Activated CD8-positive, alpha-beta T cell treated with anti-CD3 and anti-CD28 coated beads, Interleukin-2, amount 10 ng/mL, durations not matched to agents 7 days and 5 days (primary cell): ENCODE measurements at regions of chr16 and their contacts with region 1.

Region 1: DNA sequence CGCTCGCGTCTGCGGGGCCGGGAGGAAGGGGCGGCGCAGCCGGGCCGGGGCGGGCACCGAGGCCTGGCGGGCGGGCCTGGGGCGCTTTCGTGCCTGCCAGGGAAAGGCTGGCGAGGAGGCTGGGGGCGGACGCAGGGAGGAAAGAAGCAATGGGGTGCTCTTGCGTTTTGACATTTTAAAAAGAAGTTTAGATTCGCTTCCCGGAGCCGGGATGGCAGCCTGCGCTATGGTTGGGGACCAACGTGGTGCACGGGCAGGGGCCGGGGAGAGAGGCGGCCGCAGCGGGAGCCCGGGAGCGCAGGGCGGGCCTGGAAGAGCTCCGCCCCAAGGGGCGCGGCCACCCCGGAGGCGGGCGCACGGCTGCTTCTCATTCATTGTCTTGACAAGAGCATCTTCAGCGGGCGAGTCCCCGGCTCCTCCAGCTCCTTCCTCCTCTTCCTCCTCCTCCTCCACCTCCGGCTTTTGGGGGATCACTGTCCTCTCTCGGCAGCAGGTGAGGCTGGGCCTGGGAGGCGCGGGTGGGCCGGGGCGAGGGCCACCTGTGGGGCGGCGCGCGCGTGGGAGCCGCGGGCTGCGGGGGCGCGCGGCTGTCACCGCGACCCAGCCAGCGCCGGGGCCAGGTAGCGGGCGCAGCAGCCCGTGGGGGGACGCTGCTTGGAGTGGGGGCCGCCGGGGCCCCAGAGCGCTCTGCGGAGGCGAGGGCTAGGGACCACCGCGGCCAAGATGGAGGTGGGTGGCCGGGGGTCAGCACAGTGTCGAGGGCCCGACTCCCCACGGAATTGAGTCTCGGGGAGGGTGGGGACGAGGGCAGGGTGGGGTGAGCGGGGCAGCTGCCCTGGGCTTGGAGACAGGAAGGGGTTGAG is at the start of gene CORO1A:
- DNase-seq: peak; percentile 92
- ATAC-seq: peak; percentile 51
- H3K4me3 Mint-ChIP-seq: peak within 1 kb of the TSS; percentile 98
- H3K27ac Mint-ChIP-seq: peak within 1 kb of the TSS; percentile 99
- H3K4me1 Mint-ChIP-seq: peaks cover 30% of the 10 kb centered on the region
- H3K27me3 Mint-ChIP-seq: no peaks in the 10 kb centered on the region
- total RNA-seq, gene CORO1A: 1,875 to 1,983 TPM

Region 2: GRCh38 chr16:29973384-29974246 is 209.8 kb before region 1 on chr16 and contains the start of gene TAOK2:
- CTCF ChIA-PET with region 1: no interaction called
- POLR2A ChIA-PET with region 1: no interaction called
- DNase-seq: peak; percentile 98
- ATAC-seq: peak; percentile 99
- H3K4me3 Mint-ChIP-seq: peak within 1 kb of the TSS; percentile 85
- H3K27ac Mint-ChIP-seq: peak within 1 kb of the TSS; percentile 92
- H3K4me1 Mint-ChIP-seq: peaks cover 40% of the 10 kb centered on the region
- H3K27me3 Mint-ChIP-seq: no peaks in the 10 kb centered on the region
- total RNA-seq, gene TAOK2: 48.9 to 49.8 TPM

Region 3: DNA sequence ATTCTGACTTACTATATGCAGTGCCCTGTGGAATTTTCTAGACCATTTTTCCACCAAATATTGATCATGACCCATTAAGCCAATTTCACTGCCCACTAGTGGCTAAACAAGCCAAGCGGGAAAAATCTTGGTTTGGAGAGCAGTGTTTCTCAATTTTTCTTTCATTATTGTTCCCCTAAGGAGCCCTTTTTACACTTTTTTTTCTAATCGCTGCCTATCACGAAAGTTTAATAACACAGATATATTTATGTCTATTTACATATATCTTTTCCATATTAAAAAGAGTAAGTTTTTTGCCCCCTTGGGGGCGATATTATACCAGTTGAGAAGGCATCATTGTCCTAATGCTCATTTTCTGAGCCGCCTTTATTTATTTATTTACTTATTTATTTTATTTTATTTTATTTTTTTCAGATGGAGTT is 141.6 kb before region 1 on chr16:
- CTCF ChIA-PET with region 1: no interaction called
- POLR2A ChIA-PET with region 1: no interaction called
- DNase-seq: no peak
- ATAC-seq: no peak
- H3K4me3 Mint-ChIP-seq: no peak overlapping the region
- H3K27ac Mint-ChIP-seq: no peak overlapping the region
- H3K4me1 Mint-ChIP-seq: no peaks in the 10 kb centered on the region
- H3K27me3 Mint-ChIP-seq: peaks cover 13% of the 10 kb centered on the region

Region 4: DNA sequence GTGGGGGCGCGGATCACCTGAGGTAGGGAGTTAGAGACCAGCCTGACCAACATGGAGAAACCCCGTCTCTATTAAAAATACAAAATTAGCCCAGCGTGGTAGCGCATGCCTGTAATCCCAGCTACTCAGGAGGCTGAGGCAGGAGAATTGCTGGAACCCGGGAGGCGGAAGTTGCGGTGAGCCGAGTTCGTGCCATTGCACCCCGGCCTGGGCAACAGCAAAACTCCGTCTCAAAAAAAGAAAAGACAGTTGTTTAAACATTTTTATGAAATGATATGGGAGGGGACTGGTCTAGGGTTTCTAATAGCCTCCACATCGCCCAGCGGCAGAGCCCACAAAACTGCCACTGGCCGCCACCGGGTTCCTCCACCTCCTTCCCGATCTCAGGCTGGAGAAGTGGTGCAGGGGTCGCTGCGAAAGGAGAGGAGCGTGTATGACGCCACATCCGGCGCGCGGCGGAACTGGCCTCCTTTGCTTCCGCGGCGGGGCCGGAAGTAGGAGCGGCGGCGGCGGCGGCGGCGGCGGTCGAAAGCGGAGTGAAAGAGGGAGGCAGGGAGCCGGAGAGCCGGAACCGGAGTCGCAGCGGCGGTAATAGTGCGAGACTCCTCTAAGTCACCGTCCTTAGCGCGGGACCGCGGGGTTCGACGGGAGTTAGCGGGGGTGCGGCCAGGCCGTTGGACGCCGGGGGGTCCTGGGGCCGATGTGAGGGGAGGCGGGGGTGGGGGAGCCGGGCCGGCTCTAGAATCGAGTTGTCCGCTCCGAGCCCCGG is 107.8 kb before region 1 on chr16 and contains the start of gene PPP4C:
- CTCF ChIA-PET with region 1: interaction called, 3 read pairs
- POLR2A ChIA-PET with region 1: interaction called, 10 read pairs
- DNase-seq: peak; percentile 95
- ATAC-seq: peak; percentile 85
- H3K4me3 Mint-ChIP-seq: peak within 1 kb of the TSS; percentile 93
- H3K27ac Mint-ChIP-seq: peak within 1 kb of the TSS; percentile 98
- H3K4me1 Mint-ChIP-seq: peaks cover 42% of the 10 kb centered on the region
- H3K27me3 Mint-ChIP-seq: no peaks in the 10 kb centered on the region
- total RNA-seq, gene PPP4C: 157 TPM

Region 5: GRCh38 chr16:30122604-30123160 is 60.8 kb before region 1 on chr16:
- CTCF ChIA-PET with region 1: interaction called, 4 read pairs
- POLR2A ChIA-PET with region 1: interaction called, 23 read pairs
- DNase-seq: peak; percentile 37
- ATAC-seq: peak; percentile 40
- H3K4me3 Mint-ChIP-seq: peak overlapping the region; percentile 86
- H3K27ac Mint-ChIP-seq: peak overlapping the region; percentile 83
- H3K4me1 Mint-ChIP-seq: peaks cover 36% of the 10 kb centered on the region
- H3K27me3 Mint-ChIP-seq: no peaks in the 10 kb centered on the region

Region 6: GRCh38 chr16:30142672-30143346 is 40.7 kb before region 1 on chr16:
- CTCF ChIA-PET with region 1: interaction called, 19 read pairs
- POLR2A ChIA-PET with region 1: interaction called, 30 read pairs
- DNase-seq: peak; percentile 49
- ATAC-seq: peak; percentile 83
- H3K4me3 Mint-ChIP-seq: peak overlapping the region; percentile 6
- H3K27ac Mint-ChIP-seq: peak overlapping the region; percentile 27
- H3K4me1 Mint-ChIP-seq: peaks cover 24% of the 10 kb centered on the region
- H3K27me3 Mint-ChIP-seq: no peaks in the 10 kb centered on the region

Region 7: GRCh38 chr16:30346291-30346690 is 162.8 kb after region 1 on chr16:
- CTCF ChIA-PET with region 1: no interaction called
- POLR2A ChIA-PET with region 1: no interaction called
- DNase-seq: no peak
- ATAC-seq: no peak
- H3K4me3 Mint-ChIP-seq: no peak overlapping the region
- H3K27ac Mint-ChIP-seq: no peak overlapping the region
- H3K4me1 Mint-ChIP-seq: peaks cover 27% of the 10 kb centered on the region
- H3K27me3 Mint-ChIP-seq: no peaks in the 10 kb centered on the region